ENCODE measurements at regions of chr2 and their contacts with region 1.

Region 1: GRCh38 chr2:191165176-191165643 is 14.4 kb upstream of the STAT4 start:
- DNase-seq: no peak
- ATAC-seq: peak; percentile 75 to 90 (median 82)
- H3K4me3 ChIP-seq: no peak overlapping the region
- H3K27ac ChIP-seq: peak overlapping the region in 4 of 10 donors; percentile 36 to 61 (median 58)
- H3K4me1 ChIP-seq: peaks cover 0 to 34% (median 23%) of the 10 kb centered on the region in 9 donors
- H3K27me3 ChIP-seq: no peaks in the 10 kb centered on the region
- CTCF ChIP-seq: peak; percentile 47 to 84 (median 72)

Region 2: DNA sequence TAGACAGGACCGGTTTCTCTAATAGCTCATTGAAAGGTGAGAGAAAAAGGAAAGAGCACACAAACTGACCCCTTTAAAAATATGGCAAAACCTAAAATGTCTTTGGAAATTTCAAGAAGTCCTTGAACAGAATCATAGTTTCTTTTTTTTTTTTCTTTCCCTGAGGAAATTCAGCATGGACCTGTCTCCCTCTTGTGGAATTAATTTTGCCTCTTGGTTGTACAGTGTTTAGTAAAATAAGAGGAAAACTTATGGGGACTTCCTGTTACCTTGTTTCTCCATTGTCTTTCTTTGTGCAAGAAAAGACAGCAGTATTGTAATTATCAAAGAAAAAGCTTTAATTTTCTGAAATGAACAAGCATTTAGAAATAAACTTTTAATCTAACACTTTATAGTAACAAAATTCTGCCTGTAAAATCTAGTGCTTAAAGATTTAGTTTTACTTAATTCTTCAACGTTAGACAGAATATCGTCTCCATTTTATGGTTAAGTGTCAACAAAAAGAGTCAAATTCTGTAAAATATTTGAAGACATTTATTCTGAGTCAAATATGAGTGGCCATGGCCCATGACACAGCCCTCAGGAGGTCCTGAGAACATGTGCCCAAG is 336.5 kb after region 1 on chr2:
- intact Hi-C with region 1: loop called in 8 of 10 experiments (anchors 2 to 5 kb)
- DNase-seq: no peak
- ATAC-seq: peak in 6 of 8 donors; percentile 50 to 77 (median 64)
- H3K4me3 ChIP-seq: no peak overlapping the region
- H3K27ac ChIP-seq: peak overlapping the region in 7 of 10 donors; percentile 41 to 61 (median 51)
- H3K4me1 ChIP-seq: peaks cover 0 to 26% (median 7%) of the 10 kb centered on the region in 9 donors
- H3K27me3 ChIP-seq: no peaks in the 10 kb centered on the region
- CTCF ChIP-seq: peak; percentile 42 to 83 (median 72)

Region 3: GRCh38 chr2:191521608-191522208 is 356.5 kb after region 1 on chr2:
- intact Hi-C with region 1: loop called (anchors 1 to 10 kb)
- DNase-seq: no peak
- ATAC-seq: no peak
- H3K4me3 ChIP-seq: no peak overlapping the region
- H3K27ac ChIP-seq: no peak overlapping the region
- H3K4me1 ChIP-seq: no peaks in the 10 kb centered on the region
- H3K27me3 ChIP-seq: no peaks in the 10 kb centered on the region
- CTCF ChIP-seq: peak; percentile 59 to 92 (median 83)